SK-N-SH (cell line): ENCODE measurements at regions of chr4 and their contacts with region 1.

Region 1: GRCh38 chr4:173301518-173302201 is 32.5 kb downstream of the HMGB2 start:
- DNase-seq: peak; percentile 24
- H3K4me3 ChIP-seq: peak overlapping the region in 1 of 2 experiments; percentile 19; a peak in 1 of 4 replicates
- H3K27ac ChIP-seq: peak overlapping the region in 1 of 2 experiments; percentile 13; a peak in 1 of 4 replicates
- H3K4me1 ChIP-seq: peaks cover 0 to 5% of the 10 kb centered on the region in 2 experiments; a peak in 2 of 4 replicates
- H3K27me3 ChIP-seq: no peaks in the 10 kb centered on the region
- CTCF ChIP-seq: peak; percentile 86
- EP300 ChIP-seq: no peak
- RAD21 ChIP-seq: peak; percentile 78

Region 2: GRCh38 chr4:173013232-173013930 is 288.3 kb before region 1 on chr4:
- CTCF ChIA-PET with region 1: interaction called, 99 read pairs
- POLR2A ChIA-PET with region 1: no interaction called
- DNase-seq: peak; percentile 58
- H3K4me3 ChIP-seq: no peak overlapping the region; a peak in 1 of 4 replicates
- H3K27ac ChIP-seq: peak overlapping the region in 1 of 2 experiments; percentile 34; a peak in 2 of 4 replicates
- H3K4me1 ChIP-seq: peaks cover 0 to 16% of the 10 kb centered on the region in 2 experiments; a peak in 1 of 4 replicates
- H3K27me3 ChIP-seq: no peaks in the 10 kb centered on the region
- CTCF ChIP-seq: peak; percentile 77
- EP300 ChIP-seq: no peak
- RAD21 ChIP-seq: peak; percentile 81

Region 3: DNA sequence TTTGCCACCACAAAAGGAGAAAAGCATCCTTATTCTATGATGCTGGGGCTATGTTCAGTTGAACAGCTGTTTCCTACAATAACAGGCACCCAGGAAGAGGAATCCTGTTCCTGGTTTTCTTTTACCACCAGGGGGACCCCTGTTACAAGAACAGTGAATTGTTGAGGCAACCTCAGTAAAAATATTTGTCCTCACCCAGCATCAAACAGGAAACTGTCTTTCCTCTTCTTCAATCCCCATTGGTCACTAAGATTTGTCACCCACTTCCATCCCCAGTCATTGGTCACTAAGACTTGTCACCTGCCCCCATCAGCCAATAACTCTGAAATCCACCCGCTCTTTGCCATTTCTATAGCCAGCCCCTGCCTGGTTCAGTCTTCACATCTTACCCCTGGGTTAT is 276.5 kb before region 1 on chr4:
- CTCF ChIA-PET with region 1: interaction called, 49 read pairs
- POLR2A ChIA-PET with region 1: no interaction called
- DNase-seq: peak; percentile 60
- H3K4me3 ChIP-seq: no peak overlapping the region
- H3K27ac ChIP-seq: no peak overlapping the region
- H3K4me1 ChIP-seq: peaks cover 4 to 12% of the 10 kb centered on the region in 2 experiments; a peak in 3 of 4 replicates
- H3K27me3 ChIP-seq: no peaks in the 10 kb centered on the region
- CTCF ChIP-seq: peak; percentile 80
- EP300 ChIP-seq: no peak
- RAD21 ChIP-seq: peak; percentile 88

Region 4: GRCh38 chr4:173121076-173121561 is 180.5 kb before region 1 on chr4:
- CTCF ChIA-PET with region 1: no interaction called
- POLR2A ChIA-PET with region 1: no interaction called
- DNase-seq: no peak
- H3K4me3 ChIP-seq: no peak overlapping the region
- H3K27ac ChIP-seq: peak overlapping the region in 1 of 2 experiments; percentile 51; a peak in 1 of 4 replicates
- H3K4me1 ChIP-seq: peaks cover 0 to 2% of the 10 kb centered on the region in 2 experiments; a peak in 2 of 4 replicates
- H3K27me3 ChIP-seq: no peaks in the 10 kb centered on the region
- CTCF ChIP-seq: no peak
- EP300 ChIP-seq: no peak
- RAD21 ChIP-seq: no peak

Region 5: DNA sequence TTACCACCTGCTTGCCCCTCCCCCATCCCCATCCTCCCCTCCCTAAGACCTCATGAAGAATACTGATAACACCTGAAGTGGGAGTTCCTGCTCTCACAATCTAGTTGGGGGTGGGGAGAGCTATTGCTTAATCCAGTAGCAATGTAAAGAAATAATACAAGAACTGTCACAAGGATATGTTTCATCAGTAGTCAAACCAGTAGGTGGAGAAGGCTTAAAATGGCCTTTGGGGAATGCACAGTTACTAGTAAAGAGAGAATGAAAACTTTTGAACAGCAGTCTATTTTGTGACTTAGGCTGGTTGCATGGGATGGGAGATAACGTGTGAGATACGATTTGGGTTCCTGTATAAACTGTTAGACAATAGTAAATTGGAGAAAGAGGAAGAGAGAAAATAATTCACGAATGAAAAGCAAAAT is 127.1 kb before region 1 on chr4:
- CTCF ChIA-PET with region 1: interaction called, 16 read pairs
- POLR2A ChIA-PET with region 1: no interaction called
- DNase-seq: no peak
- H3K4me3 ChIP-seq: no peak overlapping the region
- H3K27ac ChIP-seq: no peak overlapping the region
- H3K4me1 ChIP-seq: peaks cover 7 to 32% of the 10 kb centered on the region in 2 experiments; a peak in 3 of 4 replicates
- H3K27me3 ChIP-seq: no peaks in the 10 kb centered on the region
- CTCF ChIP-seq: no peak
- EP300 ChIP-seq: no peak
- RAD21 ChIP-seq: no peak

Region 6: GRCh38 chr4:173264684-173265185 is 36.9 kb before region 1 on chr4:
- CTCF ChIA-PET with region 1: interaction called, 23 read pairs
- POLR2A ChIA-PET with region 1: no interaction called
- DNase-seq: peak; percentile 36
- H3K4me3 ChIP-seq: no peak overlapping the region; a peak in 1 of 4 replicates
- H3K27ac ChIP-seq: peak overlapping the region in 1 of 2 experiments; percentile 77; a peak in 2 of 4 replicates
- H3K4me1 ChIP-seq: peaks cover 8 to 23% of the 10 kb centered on the region in 2 experiments; a peak in 3 of 4 replicates
- H3K27me3 ChIP-seq: no peaks in the 10 kb centered on the region
- CTCF ChIP-seq: no peak
- EP300 ChIP-seq: no peak
- RAD21 ChIP-seq: no peak

Region 7: DNA sequence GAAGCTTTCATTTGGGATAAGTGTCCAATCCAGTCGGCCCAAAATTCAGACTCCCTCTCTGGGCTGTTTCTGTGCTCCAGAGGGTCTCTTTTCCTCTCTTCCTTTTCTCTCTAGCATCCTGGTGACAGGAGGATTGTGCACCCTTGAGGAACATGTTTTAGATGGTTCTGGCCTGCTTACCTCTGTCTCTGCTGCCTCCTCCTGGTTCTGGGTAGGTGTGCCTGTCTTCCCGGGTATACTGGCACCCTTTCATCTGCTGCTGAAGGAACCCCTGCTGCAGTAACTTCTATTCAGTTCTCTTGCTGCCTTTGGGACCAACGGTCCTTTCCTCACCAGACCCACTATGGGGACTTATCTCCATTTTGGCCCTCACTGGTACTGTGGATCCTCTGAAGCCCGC is 20.7 kb before region 1 on chr4:
- CTCF ChIA-PET with region 1: interaction called, 44 read pairs
- POLR2A ChIA-PET with region 1: no interaction called
- DNase-seq: no peak
- H3K4me3 ChIP-seq: no peak overlapping the region
- H3K27ac ChIP-seq: no peak overlapping the region
- H3K4me1 ChIP-seq: no peaks in the 10 kb centered on the region
- H3K27me3 ChIP-seq: no peaks in the 10 kb centered on the region
- CTCF ChIP-seq: no peak
- EP300 ChIP-seq: no peak
- RAD21 ChIP-seq: no peak

Region 8: GRCh38 chr4:173334085-173334772 is 32.6 kb after region 1 on chr4 and contains the start of gene HMGB2:
- CTCF ChIA-PET with region 1: interaction called, 13 read pairs
- POLR2A ChIA-PET with region 1: no interaction called
- DNase-seq: peak; percentile 97
- H3K4me3 ChIP-seq: peak within 1 kb of the TSS; percentile 96 to 99
- H3K27ac ChIP-seq: peak within 1 kb of the TSS; percentile 96 to 98
- H3K4me1 ChIP-seq: peaks cover 19 to 24% of the 10 kb centered on the region in 2 experiments
- H3K27me3 ChIP-seq: no peaks in the 10 kb centered on the region
- CTCF ChIP-seq: no peak
- EP300 ChIP-seq: no peak; a peak in 1 of 4 replicates
- RAD21 ChIP-seq: no peak
- polyA plus RNA-seq, gene HMGB2: 123 and 130 TPM in 2 replicates

Region 9: DNA sequence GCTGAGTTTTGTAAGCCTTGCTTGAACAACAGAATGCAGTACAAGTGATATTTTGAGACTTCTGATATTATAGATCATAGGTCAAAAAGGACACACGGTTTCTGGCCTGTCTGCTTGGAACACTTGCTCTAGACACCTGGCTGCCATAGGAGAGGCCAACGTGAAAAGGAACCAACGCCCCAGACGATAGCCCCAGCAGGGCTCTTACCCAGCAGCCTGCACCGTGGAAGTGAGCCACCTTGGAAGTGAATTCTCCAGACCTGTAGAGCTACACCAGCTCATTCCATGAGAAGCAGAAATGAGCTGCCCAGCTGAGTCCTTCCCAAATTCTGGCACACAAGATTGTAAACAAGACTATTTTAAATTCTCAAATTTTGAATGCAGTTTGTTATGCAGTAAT is 658.7 kb after region 1 on chr4:
- CTCF ChIA-PET with region 1: no interaction called
- POLR2A ChIA-PET with region 1: no interaction called
- DNase-seq: no peak
- H3K4me3 ChIP-seq: no peak overlapping the region
- H3K27ac ChIP-seq: 0 out of 4 replicates have a peak overlapping the region, but pooled peaks of 1 of the 2 experiments have one; percentile 2
- H3K4me1 ChIP-seq: no peaks in the 10 kb centered on the region; a peak in 2 of 4 replicates
- H3K27me3 ChIP-seq: no peaks in the 10 kb centered on the region
- CTCF ChIP-seq: no peak
- EP300 ChIP-seq: no peak
- RAD21 ChIP-seq: no peak